ENCODE measurements at regions of chr1 and their contacts with region 1.

Region 1: DNA sequence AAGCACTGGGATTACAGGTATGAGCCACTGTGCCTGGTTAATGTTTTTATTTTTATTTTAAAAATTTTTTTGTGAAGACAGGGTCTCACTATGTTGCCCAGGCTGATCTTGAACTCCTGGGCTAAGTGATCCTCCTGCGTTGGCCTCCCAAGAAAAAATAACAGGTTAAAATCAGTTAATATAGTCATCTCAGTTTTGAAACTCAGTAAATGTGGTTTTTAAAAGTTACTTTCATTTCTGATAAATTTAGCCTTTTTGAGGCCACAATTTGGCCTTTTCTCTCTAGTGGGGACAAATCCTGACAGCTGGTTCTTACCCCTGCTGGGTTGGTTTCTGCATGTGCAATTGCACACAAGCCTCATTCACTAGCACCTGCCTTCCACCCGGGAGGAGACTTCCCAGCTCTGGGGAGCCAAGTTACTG is 13.3 kb downstream of the PMF1 start:
- DNase-seq: no peak
- ATAC-seq: no peak
- H3K4me3 ChIP-seq: no peak overlapping the region
- H3K4me3 Mint-ChIP-seq: no peak overlapping the region
- H3K27ac ChIP-seq: peak overlapping the region in 1 of 2 experiments; percentile 3
- H3K27ac Mint-ChIP-seq: no peak overlapping the region
- H3K4me1 ChIP-seq: no peaks in the 10 kb centered on the region
- H3K4me1 Mint-ChIP-seq: peaks cover 16% of the 10 kb centered on the region
- H3K27me3 ChIP-seq: no peaks in the 10 kb centered on the region
- H3K27me3 Mint-ChIP-seq: no peaks in the 10 kb centered on the region
- CTCF ChIP-seq: no peak

Region 2: DNA sequence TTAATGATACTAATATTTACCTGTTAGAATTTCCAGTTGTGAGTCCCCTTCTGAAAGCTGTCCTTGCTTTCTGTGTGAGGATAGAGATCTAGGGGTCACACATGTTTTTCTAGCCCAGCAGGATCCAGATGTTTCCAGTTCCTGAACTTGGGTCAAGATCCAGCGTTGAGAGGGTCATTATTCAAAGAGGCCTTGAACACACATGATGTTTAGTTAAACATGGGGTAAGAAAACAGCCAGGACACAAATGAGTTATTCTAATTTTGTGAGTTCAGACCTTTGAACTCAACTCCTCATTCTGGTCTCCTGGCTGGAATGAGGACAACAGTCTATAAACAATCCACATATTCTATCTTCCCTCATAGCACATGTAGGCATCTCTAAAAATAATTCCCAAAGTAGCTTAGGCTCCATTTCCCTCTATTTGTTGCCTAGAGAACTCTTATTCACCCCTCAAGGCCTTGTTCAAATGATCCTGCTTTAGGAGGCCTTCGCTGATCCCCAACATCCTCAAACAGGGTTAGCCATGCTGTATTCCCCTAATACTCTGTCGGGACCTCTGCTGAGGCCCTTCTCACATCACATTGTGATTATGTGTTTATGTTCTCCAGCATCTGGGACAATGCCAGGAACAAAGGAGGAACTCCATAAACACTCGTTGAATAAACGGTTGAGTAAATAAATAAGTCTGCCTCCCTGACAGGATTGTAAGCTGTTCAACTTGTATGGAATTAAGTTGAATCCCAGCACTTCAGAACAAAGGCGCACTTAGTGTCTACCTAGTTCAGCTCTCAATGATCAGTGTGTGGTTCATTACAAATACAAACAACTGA is 1341.0 kb before region 1 on chr1:
- CTCF ChIA-PET with region 1: no interaction called
- POLR2A ChIA-PET with region 1: no interaction called
- intact Hi-C with region 1: no loop called
- DNase-seq: no peak
- ATAC-seq: no peak
- H3K4me3 ChIP-seq: no peak overlapping the region
- H3K4me3 Mint-ChIP-seq: no peak overlapping the region
- H3K27ac ChIP-seq: no peak overlapping the region
- H3K27ac Mint-ChIP-seq: no peak overlapping the region
- H3K4me1 ChIP-seq: no peaks in the 10 kb centered on the region
- H3K4me1 Mint-ChIP-seq: no peaks in the 10 kb centered on the region
- H3K27me3 ChIP-seq: no peaks in the 10 kb centered on the region
- H3K27me3 Mint-ChIP-seq: no peaks in the 10 kb centered on the region
- CTCF ChIP-seq: no peak

Region 3: GRCh38 chr1:155706091-155706619 is 520.0 kb before region 1 on chr1:
- CTCF ChIA-PET with region 1: no interaction called
- POLR2A ChIA-PET with region 1: no interaction called
- intact Hi-C with region 1: no loop called
- DNase-seq: no peak
- ATAC-seq: no peak
- H3K4me3 ChIP-seq: no peak overlapping the region
- H3K4me3 Mint-ChIP-seq: no peak overlapping the region
- H3K27ac ChIP-seq: no peak overlapping the region
- H3K27ac Mint-ChIP-seq: peak overlapping the region; percentile 6
- H3K4me1 ChIP-seq: no peaks in the 10 kb centered on the region
- H3K4me1 Mint-ChIP-seq: peaks cover 23% of the 10 kb centered on the region
- H3K27me3 ChIP-seq: no peaks in the 10 kb centered on the region
- H3K27me3 Mint-ChIP-seq: no peaks in the 10 kb centered on the region
- CTCF ChIP-seq: no peak

Region 4: DNA sequence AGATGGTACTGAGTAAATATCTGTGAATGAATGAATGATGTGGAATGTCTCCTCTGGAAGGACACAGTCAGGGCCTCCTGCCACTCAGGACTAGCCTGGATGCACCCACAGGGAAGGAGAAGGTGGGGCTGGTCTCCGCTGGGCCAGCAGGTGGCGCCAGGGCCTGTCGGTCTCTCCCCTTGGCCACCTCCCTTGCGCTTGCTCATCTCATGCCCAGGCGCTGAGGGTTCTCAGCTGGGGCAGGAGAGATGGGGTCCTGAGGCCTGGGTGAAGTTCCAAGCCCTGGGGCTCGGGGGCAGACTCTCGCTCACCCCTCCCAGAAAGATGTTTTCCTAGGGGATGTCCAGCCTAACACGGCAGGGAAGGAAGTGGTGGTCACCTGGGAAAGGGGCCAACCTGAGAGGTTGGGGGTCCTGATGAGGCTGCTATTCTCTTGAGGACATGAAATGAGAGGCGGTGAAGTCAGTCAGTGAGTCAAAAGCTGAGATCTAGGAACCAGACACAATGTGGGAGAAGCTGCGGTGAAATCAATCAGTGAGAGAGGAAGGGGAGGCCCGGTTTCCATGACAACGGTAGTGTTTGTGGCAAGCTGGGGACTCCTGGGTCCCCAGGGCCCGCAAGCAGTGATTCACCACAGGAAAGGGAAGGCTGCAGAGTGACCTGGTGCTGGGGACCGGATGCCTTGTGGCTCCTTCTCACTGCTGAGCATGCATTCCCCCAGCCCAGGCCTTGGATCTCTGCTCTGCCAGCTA is 129.3 kb before region 1 on chr1:
- CTCF ChIA-PET with region 1: interaction called, 43 read pairs
- POLR2A ChIA-PET with region 1: no interaction called
- intact Hi-C with region 1: no loop called
- DNase-seq: peak; percentile 72 to 97 (median 87)
- ATAC-seq: peak; percentile 82
- H3K4me3 ChIP-seq: peak overlapping the region in 1 of 2 experiments; percentile 7
- H3K4me3 Mint-ChIP-seq: peak overlapping the region; percentile 46
- H3K27ac ChIP-seq: peak overlapping the region; percentile 48 to 87
- H3K27ac Mint-ChIP-seq: peak overlapping the region; percentile 89
- H3K4me1 ChIP-seq: peaks cover 22% of the 10 kb centered on the region
- H3K4me1 Mint-ChIP-seq: peaks cover 26% of the 10 kb centered on the region
- H3K27me3 ChIP-seq: no peaks in the 10 kb centered on the region
- H3K27me3 Mint-ChIP-seq: peaks cover 2% of the 10 kb centered on the region
- CTCF ChIP-seq: peak; percentile 93

Region 5: GRCh38 chr1:156146020-156146768 is 79.9 kb before region 1 on chr1:
- CTCF ChIA-PET with region 1: interaction called, 252 read pairs
- POLR2A ChIA-PET with region 1: interaction called, 7 read pairs
- intact Hi-C with region 1: loop called (anchors 1 kb)
- DNase-seq: peak in 5 of 9 experiments; percentile 37 to 83 (median 44)
- ATAC-seq: peak; percentile 84
- H3K4me3 ChIP-seq: no peak overlapping the region
- H3K4me3 Mint-ChIP-seq: peak overlapping the region; percentile 60
- H3K27ac ChIP-seq: no peak overlapping the region
- H3K27ac Mint-ChIP-seq: peak overlapping the region; percentile 32
- H3K4me1 ChIP-seq: peaks cover 19% of the 10 kb centered on the region
- H3K4me1 Mint-ChIP-seq: peaks cover 20% of the 10 kb centered on the region
- H3K27me3 ChIP-seq: no peaks in the 10 kb centered on the region
- H3K27me3 Mint-ChIP-seq: no peaks in the 10 kb centered on the region
- CTCF ChIP-seq: peak; percentile 72

Region 6: DNA sequence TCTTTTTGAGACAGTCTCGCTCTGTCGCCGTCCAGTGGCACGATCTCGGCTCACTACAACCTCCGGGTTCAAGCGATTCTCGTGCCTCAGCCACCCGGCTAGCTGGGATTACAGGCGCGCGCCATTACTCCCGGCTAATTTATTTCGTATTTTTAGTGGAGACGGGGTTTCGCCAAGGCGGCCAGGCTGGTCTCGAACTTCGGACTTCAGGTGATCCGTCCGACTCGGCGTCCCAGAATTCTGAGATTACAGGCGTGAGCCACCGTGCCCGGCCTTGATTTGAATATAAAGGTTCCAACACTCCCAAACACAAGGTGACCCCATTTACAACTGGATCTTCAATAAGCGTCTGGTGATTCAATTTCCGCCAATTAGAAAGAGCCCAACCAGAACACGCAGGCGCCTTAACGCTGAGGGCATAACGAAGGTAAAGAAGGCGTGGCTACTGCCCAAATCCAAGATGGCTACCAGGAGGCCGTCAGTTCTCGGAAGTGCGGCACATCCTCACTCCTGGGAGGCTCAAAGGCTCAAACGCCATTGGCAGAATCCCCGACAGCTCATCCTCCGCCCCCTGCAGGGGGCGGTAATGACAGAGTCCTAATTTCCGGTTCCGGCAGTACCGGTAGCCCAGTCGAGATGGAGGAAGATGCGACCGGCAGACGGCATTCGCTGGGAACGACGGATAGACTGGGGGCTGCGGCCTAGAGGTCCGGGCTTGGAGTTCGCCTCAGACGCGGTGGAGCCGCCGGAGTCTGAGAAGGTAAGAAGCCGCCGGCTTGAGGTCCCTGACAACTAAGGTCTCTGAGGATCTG is 32.4 kb before region 1 on chr1 and contains the start of gene SLC25A44:
- CTCF ChIA-PET with region 1: interaction called, 7 read pairs
- POLR2A ChIA-PET with region 1: no interaction called
- intact Hi-C with region 1: loop called in 1 of 2 experiments (anchors 5 kb)
- DNase-seq: peak; percentile 89 to 99 (median 97)
- ATAC-seq: peak; percentile 99
- H3K4me3 ChIP-seq: peak within 1 kb of the TSS; percentile 78 to 88
- H3K4me3 Mint-ChIP-seq: peak within 1 kb of the TSS; percentile 100
- H3K27ac ChIP-seq: peak within 1 kb of the TSS; percentile 67 to 85
- H3K27ac Mint-ChIP-seq: peak within 1 kb of the TSS; percentile 95
- H3K4me1 ChIP-seq: peaks cover 13% of the 10 kb centered on the region
- H3K4me1 Mint-ChIP-seq: peaks cover 47% of the 10 kb centered on the region
- H3K27me3 ChIP-seq: no peaks in the 10 kb centered on the region
- H3K27me3 Mint-ChIP-seq: no peaks in the 10 kb centered on the region
- CTCF ChIP-seq: peak; percentile 13
- total RNA-seq, gene SLC25A44: 12.1 to 12.6 TPM

Region 7: GRCh38 chr1:156212833-156213643 is 13.1 kb before region 1 on chr1 and contains the start of gene PMF1:
- CTCF ChIA-PET with region 1: interaction called, 56 read pairs
- POLR2A ChIA-PET with region 1: interaction called, 12 read pairs
- intact Hi-C with region 1: loop called in 1 of 2 experiments (anchors 1 kb)
- DNase-seq: peak; percentile 89 to 97 (median 95)
- ATAC-seq: peak; percentile 95
- H3K4me3 ChIP-seq: peak within 1 kb of the TSS; percentile 70 to 79
- H3K4me3 Mint-ChIP-seq: peak within 1 kb of the TSS; percentile 97
- H3K27ac ChIP-seq: peak within 1 kb of the TSS; percentile 92 to 95
- H3K27ac Mint-ChIP-seq: peak within 1 kb of the TSS; percentile 99
- H3K4me1 ChIP-seq: peaks cover 24% of the 10 kb centered on the region
- H3K4me1 Mint-ChIP-seq: peaks cover 31% of the 10 kb centered on the region
- H3K27me3 ChIP-seq: no peaks in the 10 kb centered on the region
- H3K27me3 Mint-ChIP-seq: no peaks in the 10 kb centered on the region
- CTCF ChIP-seq: no peak
- total RNA-seq, gene PMF1: 72.1 to 74.4 TPM

Region 8: GRCh38 chr1:156394835-156395461 is 168.8 kb after region 1 on chr1:
- CTCF ChIA-PET with region 1: no interaction called
- POLR2A ChIA-PET with region 1: no interaction called
- intact Hi-C with region 1: no loop called
- DNase-seq: no peak
- ATAC-seq: no peak
- H3K4me3 ChIP-seq: no peak overlapping the region
- H3K4me3 Mint-ChIP-seq: no peak overlapping the region
- H3K27ac ChIP-seq: no peak overlapping the region
- H3K27ac Mint-ChIP-seq: no peak overlapping the region
- H3K4me1 ChIP-seq: no peaks in the 10 kb centered on the region
- H3K4me1 Mint-ChIP-seq: no peaks in the 10 kb centered on the region
- H3K27me3 ChIP-seq: no peaks in the 10 kb centered on the region
- H3K27me3 Mint-ChIP-seq: peaks cover 10% of the 10 kb centered on the region
- CTCF ChIP-seq: no peak

Measured in CD8-positive, alpha-beta T cell (primary cell).